GM12878 (cell line): ENCODE measurements at regions of chr14 and their contacts with region 1.

Region 1: DNA sequence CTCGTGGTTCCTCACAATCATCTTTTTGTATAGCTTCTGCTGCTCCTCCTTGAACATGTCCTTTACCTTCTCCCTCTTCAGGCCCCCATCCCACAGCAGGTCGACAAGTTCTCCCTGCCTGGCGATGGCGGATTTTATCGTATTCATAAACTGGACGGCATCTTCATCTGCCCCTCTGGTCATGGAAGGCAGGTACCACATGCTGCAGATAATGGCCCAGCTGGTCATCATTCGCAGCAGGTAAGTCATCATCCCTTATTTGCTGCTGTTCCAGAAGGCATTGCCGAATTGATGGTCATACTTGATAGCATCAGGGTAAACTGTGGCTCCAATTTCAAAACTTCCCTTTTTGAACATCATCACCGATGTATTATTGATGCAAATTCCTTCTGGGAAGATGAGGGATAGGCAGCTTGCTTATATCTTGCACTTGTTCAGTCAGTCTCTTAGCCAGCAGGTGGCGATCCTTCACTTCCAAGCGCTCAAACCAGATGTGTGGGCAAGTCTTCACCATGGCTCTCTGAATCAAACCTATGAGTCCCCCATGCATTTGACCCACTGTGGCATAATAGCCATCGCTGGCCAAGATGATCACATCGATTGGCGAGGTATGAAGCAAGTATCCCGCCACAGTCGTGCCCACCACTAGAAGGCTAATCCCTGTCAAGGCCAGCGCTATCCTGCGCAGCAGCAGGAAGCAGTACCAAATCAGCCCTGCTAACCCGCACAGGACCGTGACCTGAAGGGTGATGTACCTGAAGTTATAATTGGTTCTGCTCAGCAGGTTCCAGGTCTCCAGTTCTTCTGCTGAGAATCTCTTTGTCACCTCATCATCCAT is 381.5 kb upstream of the STXBP6 start:
- DNase-seq: no peak
- ATAC-seq: peak; percentile 52; the same call in 1 of the 3 replicates
- H3K4me3 ChIP-seq: no peak overlapping the region
- H3K27ac ChIP-seq: no peak overlapping the region
- H3K4me1 ChIP-seq: no peaks in the 10 kb centered on the region
- H3K27me3 ChIP-seq: no peaks in the 10 kb centered on the region
- CTCF ChIP-seq: peak in 1 of 3 experiments; percentile 33; a peak in 1 of 6 replicates
- EP300 ChIP-seq: no peak
- POLR2A ChIP-seq: no peak
- RAD21 ChIP-seq: no peak

Region 2: DNA sequence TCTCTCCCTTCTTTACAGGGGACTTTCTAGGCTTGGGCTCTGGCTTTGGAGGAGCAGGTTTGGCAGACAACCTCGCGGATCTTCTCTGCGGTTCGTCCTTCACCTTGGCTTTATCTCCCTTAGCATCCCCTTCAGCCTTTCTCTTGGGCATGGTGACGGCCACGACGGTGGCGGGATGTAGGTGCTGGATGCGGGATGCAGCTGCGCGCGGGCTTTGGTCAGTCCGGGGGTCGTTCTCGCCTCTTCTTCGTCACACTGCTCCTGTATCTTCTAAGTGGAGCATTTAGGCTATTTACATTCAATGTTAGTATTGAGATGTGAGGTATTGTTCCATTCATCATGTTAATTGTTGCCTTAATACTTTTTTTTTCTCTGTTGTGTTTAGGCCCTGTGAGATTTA is 164.2 kb before region 1 on chr14:
- CTCF ChIA-PET with region 1: no interaction called
- POLR2A ChIA-PET with region 1: no interaction called
- RAD21 ChIA-PET with region 1: no interaction called
- SMC1A ChIA-PET with region 1: no interaction called
- in situ Hi-C with region 1: no loop called
- intact Hi-C with region 1: no loop called
- DNase-seq: no peak
- ATAC-seq: no peak
- H3K4me3 ChIP-seq: no peak overlapping the region
- H3K27ac ChIP-seq: no peak overlapping the region
- H3K4me1 ChIP-seq: no peaks in the 10 kb centered on the region
- H3K27me3 ChIP-seq: no peaks in the 10 kb centered on the region
- CTCF ChIP-seq: no peak
- EP300 ChIP-seq: no peak
- POLR2A ChIP-seq: no peak
- RAD21 ChIP-seq: no peak

Region 3: DNA sequence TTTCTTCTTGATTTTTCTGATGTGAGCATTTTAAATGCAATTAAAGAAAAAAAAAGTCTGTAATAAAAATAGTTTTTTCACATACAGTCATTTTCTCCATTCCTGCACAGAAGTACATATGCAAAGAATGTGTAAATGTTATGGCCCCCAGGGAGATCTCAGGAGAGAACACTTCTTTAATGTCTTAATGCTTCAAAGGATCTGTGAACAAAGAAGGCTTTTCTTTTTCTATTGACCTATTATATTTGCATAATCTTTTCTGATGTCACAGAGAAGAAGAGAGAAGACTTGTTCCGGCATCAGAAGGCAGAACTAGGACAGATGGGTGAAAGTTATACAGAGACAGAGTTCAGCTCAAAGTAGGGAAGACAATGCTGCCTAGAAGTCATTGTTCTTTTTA is 32.0 kb after region 1 on chr14:
- CTCF ChIA-PET with region 1: interaction called, 11 read pairs
- POLR2A ChIA-PET with region 1: no interaction called
- RAD21 ChIA-PET with region 1: no interaction called
- SMC1A ChIA-PET with region 1: no interaction called
- in situ Hi-C with region 1: no loop called
- intact Hi-C with region 1: no loop called
- DNase-seq: no peak
- ATAC-seq: peak; percentile 40
- H3K4me3 ChIP-seq: no peak overlapping the region
- H3K27ac ChIP-seq: no peak overlapping the region
- H3K4me1 ChIP-seq: no peaks in the 10 kb centered on the region
- H3K27me3 ChIP-seq: no peaks in the 10 kb centered on the region
- CTCF ChIP-seq: no peak
- EP300 ChIP-seq: no peak; a peak in 1 of 4 replicates
- POLR2A ChIP-seq: no peak
- RAD21 ChIP-seq: no peak

Region 4: DNA sequence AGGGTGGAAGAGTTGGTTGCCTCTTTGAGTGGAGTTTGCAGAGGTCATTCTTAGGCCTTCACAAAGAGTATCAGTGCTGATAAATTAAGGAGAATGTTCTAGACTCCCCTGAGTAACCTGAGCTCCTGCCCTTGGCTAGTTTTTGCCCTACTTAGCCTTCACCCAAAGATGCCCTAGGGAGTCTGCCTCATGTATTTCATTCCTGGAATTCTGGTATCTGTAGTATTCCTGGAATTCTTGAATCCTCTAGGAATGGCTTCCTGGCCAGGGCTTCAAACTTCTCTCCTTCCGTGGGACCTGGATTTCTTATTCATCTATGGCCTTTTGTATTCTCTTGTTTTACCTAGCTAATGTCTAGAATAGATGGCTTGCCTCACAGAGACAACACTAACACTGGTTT is 465.3 kb after region 1 on chr14:
- CTCF ChIA-PET with region 1: no interaction called
- POLR2A ChIA-PET with region 1: no interaction called
- RAD21 ChIA-PET with region 1: no interaction called
- SMC1A ChIA-PET with region 1: no interaction called
- in situ Hi-C with region 1: no loop called
- intact Hi-C with region 1: no loop called
- DNase-seq: no peak
- ATAC-seq: no peak
- H3K4me3 ChIP-seq: no peak overlapping the region
- H3K27ac ChIP-seq: no peak overlapping the region
- H3K4me1 ChIP-seq: no peaks in the 10 kb centered on the region
- H3K27me3 ChIP-seq: no peaks in the 10 kb centered on the region
- CTCF ChIP-seq: no peak
- EP300 ChIP-seq: no peak
- POLR2A ChIP-seq: no peak
- RAD21 ChIP-seq: no peak